MCF 10A (cell line): ENCODE measurements at regions of chr18 and their contacts with region 1.

Region 1: DNA sequence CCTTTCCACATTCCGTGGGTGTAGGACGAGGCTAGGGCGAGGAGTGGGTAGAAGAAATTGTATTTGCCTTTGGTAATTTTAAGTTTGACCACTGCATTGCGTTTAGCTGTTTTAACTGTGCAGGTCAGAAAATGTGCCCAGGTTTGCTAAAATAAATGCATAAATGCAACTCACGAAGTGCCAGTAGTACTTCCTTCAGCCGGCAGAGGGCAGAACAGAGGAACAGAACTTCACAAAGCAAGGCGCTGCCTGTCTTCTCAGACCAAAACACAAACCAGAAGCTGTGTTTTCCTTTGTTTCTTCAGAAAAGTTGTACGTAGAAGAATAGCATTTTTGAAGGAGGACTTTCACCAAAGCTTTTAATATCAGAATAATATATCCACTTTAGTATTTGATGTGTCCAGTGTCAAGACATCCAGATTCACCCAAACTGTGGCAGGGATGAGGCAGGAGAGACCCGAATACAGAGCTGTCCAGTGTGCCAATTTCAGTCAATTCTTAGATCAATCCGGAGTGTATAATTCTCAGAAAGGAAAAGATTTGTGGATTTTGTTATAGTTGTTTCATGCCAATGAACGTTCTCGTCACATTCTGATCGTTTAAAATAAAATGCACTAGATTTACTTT is 348.6 kb downstream of the DLGAP1 start:
- DNase-seq: peak; percentile 38
- H3K4me3 Mint-ChIP-seq: no peak overlapping the region
- H3K27ac Mint-ChIP-seq: no peak overlapping the region
- H3K4me1 Mint-ChIP-seq: no peaks in the 10 kb centered on the region
- H3K27me3 Mint-ChIP-seq: peaks cover 9% of the 10 kb centered on the region
- CTCF ChIP-seq: peak; percentile 76

Region 2: GRCh38 chr18:3869848-3870247 is 236.7 kb before region 1 on chr18:
- CTCF ChIA-PET with region 1: no interaction called
- POLR2A ChIA-PET with region 1: no interaction called
- intact Hi-C with region 1: no loop called
- DNase-seq: peak; percentile 68
- H3K4me3 Mint-ChIP-seq: no peak overlapping the region
- H3K27ac Mint-ChIP-seq: no peak overlapping the region
- H3K4me1 Mint-ChIP-seq: no peaks in the 10 kb centered on the region
- H3K27me3 Mint-ChIP-seq: peaks cover 21% of the 10 kb centered on the region
- CTCF ChIP-seq: peak; percentile 65

Region 3: GRCh38 chr18:4096486-4096885 is 10.0 kb before region 1 on chr18:
- CTCF ChIA-PET with region 1: interaction called, 41 read pairs
- POLR2A ChIA-PET with region 1: interaction called, 3 read pairs
- intact Hi-C with region 1: no loop called
- DNase-seq: no peak
- H3K4me3 Mint-ChIP-seq: no peak overlapping the region
- H3K27ac Mint-ChIP-seq: no peak overlapping the region
- H3K4me1 Mint-ChIP-seq: peaks cover 10% of the 10 kb centered on the region
- H3K27me3 Mint-ChIP-seq: no peaks in the 10 kb centered on the region
- CTCF ChIP-seq: no peak

Region 4: DNA sequence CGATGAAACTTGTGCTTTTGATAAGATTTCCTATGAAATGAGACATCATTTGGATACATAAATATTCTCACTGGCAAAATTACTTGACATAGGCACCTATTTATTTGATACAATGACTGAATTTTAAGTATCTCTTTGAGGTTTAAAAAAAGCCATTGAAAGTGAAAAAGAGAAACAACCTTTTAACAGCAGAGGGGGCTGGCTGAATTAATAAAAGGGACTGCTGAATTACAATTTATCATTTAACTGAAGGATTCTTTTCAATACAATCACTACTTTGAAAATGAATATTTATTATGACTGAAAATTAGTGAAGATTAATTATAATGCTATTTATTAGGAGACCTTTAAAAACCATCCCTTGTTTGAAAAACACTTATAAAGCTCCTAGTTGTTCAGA is 13.3 kb after region 1 on chr18:
- CTCF ChIA-PET with region 1: interaction called, 50 read pairs
- POLR2A ChIA-PET with region 1: no interaction called
- intact Hi-C with region 1: no loop called
- DNase-seq: no peak
- H3K4me3 Mint-ChIP-seq: no peak overlapping the region
- H3K27ac Mint-ChIP-seq: no peak overlapping the region
- H3K4me1 Mint-ChIP-seq: peaks cover 1% of the 10 kb centered on the region
- H3K27me3 Mint-ChIP-seq: peaks cover 15% of the 10 kb centered on the region
- CTCF ChIP-seq: no peak

Region 5: GRCh38 chr18:4264347-4264791 is 157.8 kb after region 1 on chr18:
- CTCF ChIA-PET with region 1: no interaction called
- POLR2A ChIA-PET with region 1: no interaction called
- intact Hi-C with region 1: no loop called
- DNase-seq: no peak
- H3K4me3 Mint-ChIP-seq: no peak overlapping the region
- H3K27ac Mint-ChIP-seq: no peak overlapping the region
- H3K4me1 Mint-ChIP-seq: peaks cover 6% of the 10 kb centered on the region
- H3K27me3 Mint-ChIP-seq: peaks cover 54% of the 10 kb centered on the region
- CTCF ChIP-seq: no peak

Region 6: GRCh38 chr18:4333043-4333442 is 226.5 kb after region 1 on chr18:
- CTCF ChIA-PET with region 1: no interaction called
- POLR2A ChIA-PET with region 1: no interaction called
- intact Hi-C with region 1: no loop called
- DNase-seq: no peak
- H3K4me3 Mint-ChIP-seq: no peak overlapping the region
- H3K27ac Mint-ChIP-seq: no peak overlapping the region
- H3K4me1 Mint-ChIP-seq: no peaks in the 10 kb centered on the region
- H3K27me3 Mint-ChIP-seq: peaks cover 78% of the 10 kb centered on the region
- CTCF ChIP-seq: no peak

Region 7: GRCh38 chr18:5021558-5021957 is 915.0 kb after region 1 on chr18:
- CTCF ChIA-PET with region 1: interaction called, 23 read pairs
- POLR2A ChIA-PET with region 1: no interaction called
- intact Hi-C with region 1: loop called (anchors 1 kb)
- DNase-seq: no peak
- H3K4me3 Mint-ChIP-seq: no peak overlapping the region
- H3K27ac Mint-ChIP-seq: no peak overlapping the region
- H3K4me1 Mint-ChIP-seq: no peaks in the 10 kb centered on the region
- H3K27me3 Mint-ChIP-seq: no peaks in the 10 kb centered on the region
- CTCF ChIP-seq: no peak